Left ventricle myocardium superior (tissue), 1 donor: ENCODE measurements at regions of chr2 and their contacts with region 1.

Region 1: GRCh38 chr2:165293440-165294353 is 54.5 kb downstream of the SCN2A start:
- DNase-seq: no peak
- ATAC-seq: peak; percentile 99

Region 2: GRCh38 chr2:164992818-164993217 is 300.9 kb before region 1 on chr2:
- intact Hi-C with region 1: loop called (anchors 10 kb)
- DNase-seq: no peak
- ATAC-seq: peak; percentile 66

Region 3: DNA sequence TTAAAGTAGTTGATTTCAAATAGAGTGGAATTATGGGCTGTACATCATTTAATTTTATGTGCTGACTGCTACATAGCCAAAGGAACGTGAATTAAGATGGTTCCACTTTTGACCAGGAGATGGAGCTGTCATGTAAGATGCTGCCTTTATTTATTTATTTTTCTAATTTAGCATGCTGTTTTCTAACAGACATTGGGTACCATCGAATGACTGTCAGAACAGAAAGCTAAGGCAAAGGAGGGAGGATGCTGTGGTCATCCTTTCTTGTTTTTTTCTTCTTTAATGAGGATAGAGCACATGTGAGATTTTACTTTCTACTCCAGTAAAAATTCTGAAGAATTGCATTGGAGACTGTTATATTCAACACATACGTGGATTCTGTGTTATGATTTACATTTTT is 54.5 kb before region 1 on chr2 and contains the start of gene SCN2A:
- intact Hi-C with region 1: loop called (anchors 5 kb)
- DNase-seq: no peak
- ATAC-seq: peak; percentile 54
- total RNA-seq, gene SCN2A: 0.30 TPM

Region 4: DNA sequence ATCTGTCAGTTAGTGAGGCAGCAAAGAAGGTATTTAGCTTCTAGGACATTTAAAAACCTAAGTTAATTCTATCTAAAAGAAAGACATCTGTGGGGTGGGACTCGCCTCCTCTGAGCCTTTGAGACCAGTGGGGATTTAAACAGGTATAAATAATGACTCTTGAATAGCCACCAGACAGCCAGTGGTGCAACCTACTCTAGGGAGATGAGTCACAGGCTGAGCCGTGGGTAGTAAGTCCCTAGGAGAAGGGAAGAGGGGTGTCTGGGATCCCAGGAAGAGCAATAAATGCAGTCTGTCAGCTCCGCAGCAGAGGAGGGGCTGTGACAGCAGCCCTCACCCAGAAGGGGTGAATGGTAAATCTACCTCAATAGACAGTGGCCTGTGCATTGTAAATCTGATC is 543.4 kb after region 1 on chr2:
- intact Hi-C with region 1: no loop called
- DNase-seq: no peak
- ATAC-seq: no peak